Posterior vena cava (tissue), 2 donors: ENCODE measurements at regions of chr12 and their contacts with region 1.

Region 1: GRCh38 chr12:11648831-11649702 is at the start of gene ETV6:
- DNase-seq: peak; percentile 90
- total RNA-seq, gene ETV6: 60.3 to 65.7 TPM

Region 2: DNA sequence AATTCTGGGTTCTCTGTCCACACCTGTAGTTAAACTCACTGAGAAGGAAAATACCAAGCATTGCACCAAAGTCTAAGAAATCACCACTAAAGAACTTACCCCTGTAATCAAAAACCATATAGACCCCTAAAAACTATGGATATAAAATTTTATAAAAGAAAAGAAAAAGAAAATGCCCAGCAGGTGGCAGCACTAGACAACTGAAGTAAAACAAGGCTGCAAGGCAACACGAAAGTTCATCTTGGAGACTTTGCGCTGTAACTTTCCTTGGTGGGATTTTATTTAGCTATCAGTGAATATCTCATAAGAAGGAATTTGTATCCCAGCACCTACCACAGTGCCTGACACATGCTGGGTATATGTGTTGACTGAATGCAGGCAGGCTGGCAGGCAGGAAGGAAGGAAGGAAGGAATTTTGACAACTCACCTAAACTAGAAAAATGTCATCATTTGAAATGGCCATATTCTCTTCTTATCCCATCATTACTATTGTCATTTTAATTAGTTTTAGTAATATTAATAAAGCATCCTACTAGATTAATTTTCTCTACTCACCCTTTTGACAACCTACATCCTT is 67.8 kb before region 1 on chr12:
- intact Hi-C with region 1: loop called in 1 of 2 experiments (anchors 10 kb)
- DNase-seq: no peak

Region 3: DNA sequence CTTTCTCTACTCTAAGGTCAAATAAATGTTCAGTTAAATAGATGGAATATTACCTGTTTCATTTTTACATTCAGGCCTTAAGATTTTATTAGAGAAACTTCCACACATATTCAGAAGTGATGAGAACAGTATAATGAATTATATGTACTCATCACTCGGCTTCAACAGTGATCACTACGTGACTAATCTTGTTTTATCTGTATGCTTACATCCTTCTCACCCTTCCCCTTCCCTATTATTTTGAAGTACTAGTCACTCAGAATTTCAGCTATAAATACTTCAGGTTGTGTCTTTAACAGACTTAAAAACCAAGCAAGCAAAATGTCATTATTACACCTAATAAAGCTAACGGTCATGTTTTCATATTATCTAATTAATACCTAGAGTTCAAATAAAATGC is 35.3 kb after region 1 on chr12:
- intact Hi-C with region 1: no loop called
- DNase-seq: no peak

Region 4: GRCh38 chr12:11749943-11750690 is 101.0 kb after region 1 on chr12:
- intact Hi-C with region 1: loop called (anchors 5 to 10 kb)
- DNase-seq: peak; percentile 85

Region 5: DNA sequence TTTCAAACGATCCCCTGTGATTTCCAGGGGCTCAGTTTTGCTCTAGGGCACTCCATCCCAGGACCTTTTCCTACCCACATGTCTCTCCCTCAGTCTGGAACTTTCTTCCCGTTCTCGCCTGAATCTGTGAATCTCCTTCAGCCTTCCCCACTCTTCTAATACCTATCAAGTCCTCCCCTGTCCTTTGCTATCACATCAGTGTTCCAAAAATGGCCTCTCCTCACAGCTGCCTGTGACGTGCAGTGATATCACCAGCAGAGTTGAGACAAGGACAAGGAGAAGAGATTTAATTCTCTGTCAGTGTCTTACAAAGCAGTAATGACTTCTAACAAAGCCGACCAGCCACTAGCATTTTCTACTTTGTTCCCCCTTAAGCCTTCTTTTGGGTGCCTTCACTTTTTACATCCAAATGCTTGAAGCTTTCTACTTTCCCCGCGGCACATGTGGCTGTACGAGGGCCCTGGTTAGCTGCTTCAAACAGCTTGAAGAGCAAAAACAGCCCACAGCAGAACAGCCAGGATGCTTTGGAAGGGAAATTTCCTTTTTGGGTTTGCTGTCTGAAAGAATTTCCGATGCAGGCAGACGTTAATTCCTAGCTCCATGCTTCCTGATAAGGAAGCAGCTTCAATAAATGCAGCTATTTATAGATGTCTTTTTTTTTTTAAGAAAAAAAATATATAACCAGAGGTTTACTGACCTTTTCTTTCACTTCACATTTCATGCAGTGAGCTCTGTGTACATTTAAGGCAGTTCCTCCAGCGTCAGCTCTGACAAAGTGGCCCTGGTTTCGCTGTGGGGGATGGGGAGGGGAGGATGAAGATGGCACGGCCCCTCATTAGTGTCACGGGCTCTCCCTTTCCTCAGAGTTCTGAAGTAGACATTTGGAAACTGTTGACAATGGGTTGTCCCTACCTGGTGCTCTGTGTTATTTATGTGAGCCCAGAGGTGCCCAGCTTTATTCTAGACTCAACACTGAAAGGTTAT is 109.7 kb after region 1 on chr12:
- intact Hi-C with region 1: loop called (anchors 5 to 10 kb)
- DNase-seq: no peak

Region 6: DNA sequence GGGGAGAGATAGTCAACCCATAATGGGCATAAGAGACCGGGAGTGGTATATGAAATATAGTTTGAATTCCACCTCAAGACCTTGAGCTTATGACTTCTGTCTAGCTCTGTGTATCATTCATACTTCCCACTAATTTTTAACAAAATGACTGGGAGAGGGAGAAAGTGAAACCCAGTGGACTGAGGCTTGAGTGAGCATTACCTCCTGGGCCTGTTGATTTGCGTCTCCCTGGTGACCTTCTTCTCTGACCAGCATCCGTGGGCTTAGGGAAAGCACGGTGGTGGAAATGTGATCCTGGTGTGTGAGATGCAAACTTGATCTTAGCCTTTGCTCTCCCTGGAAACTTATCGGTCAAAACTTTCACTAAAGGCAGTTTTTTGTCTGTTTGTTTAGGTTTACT is 213.7 kb after region 1 on chr12:
- intact Hi-C with region 1: no loop called
- DNase-seq: no peak